Ovary (tissue), 10 donors: ENCODE measurements at regions of chr1 and their contacts with region 1.

Region 1: DNA sequence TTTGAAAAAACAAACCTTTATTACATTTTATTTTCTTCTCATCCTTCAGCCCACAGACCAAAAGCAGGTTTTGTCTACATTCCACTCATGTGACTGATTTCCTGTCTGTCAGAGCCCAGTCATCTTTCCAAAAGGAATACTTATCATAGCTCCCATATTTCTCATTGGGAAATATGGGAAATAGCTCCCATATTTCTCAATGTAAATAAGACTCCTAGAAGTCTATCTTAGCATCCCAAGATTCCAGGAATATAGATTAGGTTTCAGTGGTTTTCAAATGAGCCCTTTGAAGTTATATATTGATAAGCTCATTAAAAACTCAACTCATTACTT is 19.1 kb upstream of the NRDC start:
- DNase-seq: no peak
- H3K4me3 ChIP-seq: no peak overlapping the region
- H3K27ac ChIP-seq: no peak overlapping the region
- H3K4me1 ChIP-seq: no peaks in the 10 kb centered on the region
- H3K27me3 ChIP-seq: no peaks in the 10 kb centered on the region
- CTCF ChIP-seq: no peak
- EP300 ChIP-seq: no peak
- POLR2A ChIP-seq: no peak

Region 2: GRCh38 chr1:51990478-51990965 is 92.9 kb after region 1 on chr1 and contains the start of gene RAB3B:
- intact Hi-C with region 1: loop called in 2 of 4 experiments (anchors 5 to 10 kb)
- DNase-seq: peak; percentile 68 to 86 (median 79)
- H3K4me3 ChIP-seq: peak within 1 kb of the TSS; percentile 35
- H3K27ac ChIP-seq: no peak within 1 kb of the TSS
- H3K4me1 ChIP-seq: peaks cover 3% of the 10 kb centered on the region
- H3K27me3 ChIP-seq: no peaks in the 10 kb centered on the region
- CTCF ChIP-seq: no peak
- EP300 ChIP-seq: no peak
- POLR2A ChIP-seq: no peak
- total RNA-seq, gene RAB3B: 1.1 to 8.2 (median 4.0) TPM

Region 3: GRCh38 chr1:52002038-52002917 is 104.6 kb after region 1 on chr1:
- intact Hi-C with region 1: loop called in 2 of 4 experiments (anchors 5 to 10 kb)
- DNase-seq: peak in 2 of 5 donors; percentile 20 to 55
- H3K4me3 ChIP-seq: no peak overlapping the region
- H3K27ac ChIP-seq: no peak overlapping the region
- H3K4me1 ChIP-seq: peaks cover 9% of the 10 kb centered on the region
- H3K27me3 ChIP-seq: no peaks in the 10 kb centered on the region
- CTCF ChIP-seq: peak; percentile 76 to 88 (median 78)
- EP300 ChIP-seq: no peak
- POLR2A ChIP-seq: no peak

Region 4: GRCh38 chr1:52296345-52296744 is 398.7 kb after region 1 on chr1:
- intact Hi-C with region 1: no loop called
- DNase-seq: no peak
- H3K4me3 ChIP-seq: no peak overlapping the region
- H3K27ac ChIP-seq: no peak overlapping the region
- H3K4me1 ChIP-seq: no peaks in the 10 kb centered on the region
- H3K27me3 ChIP-seq: no peaks in the 10 kb centered on the region
- CTCF ChIP-seq: peak in 2 of 3 donors; percentile 15 to 40
- EP300 ChIP-seq: no peak
- POLR2A ChIP-seq: no peak

Region 5: GRCh38 chr1:52569449-52570210 is 672.0 kb after region 1 on chr1:
- intact Hi-C with region 1: loop called in 1 of 4 experiments (anchors 10 kb)
- DNase-seq: no peak
- H3K4me3 ChIP-seq: no peak overlapping the region
- H3K27ac ChIP-seq: no peak overlapping the region
- H3K4me1 ChIP-seq: no peaks in the 10 kb centered on the region
- H3K27me3 ChIP-seq: no peaks in the 10 kb centered on the region
- CTCF ChIP-seq: no peak
- EP300 ChIP-seq: no peak
- POLR2A ChIP-seq: no peak